Brain microvascular endothelial cell (primary cell): ENCODE measurements at regions of chr12 and their contacts with region 1.

Region 1: GRCh38 chr12:56601503-56601902 is 28.6 kb downstream of the BAZ2A start:
- DNase-seq: peak; percentile 10
- H3K4me3 ChIP-seq: no peak overlapping the region
- H3K27ac ChIP-seq: no peak overlapping the region
- H3K27me3 ChIP-seq: no peaks in the 10 kb centered on the region
- CTCF ChIP-seq: peak; percentile 54

Region 2: DNA sequence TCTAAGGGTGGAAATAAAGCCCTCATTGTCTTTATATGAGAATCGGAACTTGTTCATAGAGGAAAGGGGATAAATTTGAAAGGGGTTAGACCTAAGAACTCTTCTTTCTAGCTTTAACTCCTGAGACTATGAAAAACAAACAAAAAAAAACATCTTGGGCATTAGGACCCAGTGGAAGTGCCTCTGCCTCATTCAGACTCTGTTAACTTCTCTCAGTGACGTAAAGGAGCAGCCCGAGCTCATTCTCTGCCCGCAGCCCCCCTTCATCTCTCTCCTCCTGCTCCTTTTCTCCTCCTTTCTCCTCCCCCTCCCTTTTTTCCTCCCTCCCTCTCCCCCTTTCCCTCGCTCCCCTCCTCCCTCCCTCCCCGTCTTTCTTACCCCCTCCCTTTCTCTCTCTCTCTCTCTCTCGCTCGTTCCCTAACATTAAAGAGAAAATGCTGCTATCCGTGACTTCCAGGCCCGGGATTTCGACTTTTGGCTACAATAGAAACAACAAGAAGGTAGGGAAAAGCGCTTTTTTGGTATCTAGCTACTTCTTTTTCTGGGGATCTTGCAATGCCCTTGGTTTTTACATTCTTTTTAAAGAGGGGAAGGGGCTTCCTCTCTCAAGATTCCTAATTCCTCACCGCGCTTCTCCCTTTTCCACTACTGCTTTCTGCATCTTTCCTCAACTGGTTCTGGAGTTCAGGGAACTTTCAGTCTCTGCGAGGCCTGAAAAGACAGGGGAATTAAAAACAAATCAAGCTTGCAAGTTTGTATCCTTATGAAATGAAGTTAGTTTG is 79.7 kb before region 1 on chr12 and contains the start of gene RBMS2:
- in situ Hi-C with region 1: loop called (anchors 25 kb)
- DNase-seq: peak; percentile 97
- H3K4me3 ChIP-seq: peak within 1 kb of the TSS; percentile 75
- H3K27ac ChIP-seq: peak within 1 kb of the TSS; percentile 75
- H3K27me3 ChIP-seq: no peaks in the 10 kb centered on the region
- CTCF ChIP-seq: no peak

Region 3: GRCh38 chr12:57151741-57152630 is 550.5 kb after region 1 on chr12:
- in situ Hi-C with region 1: no loop called
- DNase-seq: peak; percentile 32
- H3K4me3 ChIP-seq: no peak overlapping the region
- H3K27ac ChIP-seq: peak overlapping the region; percentile 65
- H3K27me3 ChIP-seq: no peaks in the 10 kb centered on the region
- CTCF ChIP-seq: no peak